Activated CD4-positive, alpha-beta T cell treated with anti-CD3 and anti-CD28 coated beads for 36 hours (primary cell): ENCODE measurements at regions of chr18 and their contacts with region 1.

Region 1: GRCh38 chr18:72544092-72544886 is at the start of gene CBLN2:
- DNase-seq: peak; percentile 77
- ATAC-seq: peak; percentile 76
- H3K4me3 Mint-ChIP-seq: no peak within 1 kb of the TSS
- H3K27ac Mint-ChIP-seq: no peak within 1 kb of the TSS
- H3K4me1 Mint-ChIP-seq: peaks cover 12% of the 10 kb centered on the region
- H3K27me3 Mint-ChIP-seq: peaks cover 34% of the 10 kb centered on the region
- total RNA-seq, gene CBLN2: not detected

Region 2: GRCh38 chr18:70598406-70598805 is 1945.9 kb before region 1 on chr18:
- CTCF ChIA-PET with region 1: no interaction called
- POLR2A ChIA-PET with region 1: no interaction called
- intact Hi-C with region 1: loop called in 1 of 2 experiments (anchors 10 kb)
- DNase-seq: no peak
- ATAC-seq: no peak
- H3K4me3 Mint-ChIP-seq: no peak overlapping the region
- H3K27ac Mint-ChIP-seq: no peak overlapping the region
- H3K4me1 Mint-ChIP-seq: peaks cover 8% of the 10 kb centered on the region
- H3K27me3 Mint-ChIP-seq: no peaks in the 10 kb centered on the region

Region 3: DNA sequence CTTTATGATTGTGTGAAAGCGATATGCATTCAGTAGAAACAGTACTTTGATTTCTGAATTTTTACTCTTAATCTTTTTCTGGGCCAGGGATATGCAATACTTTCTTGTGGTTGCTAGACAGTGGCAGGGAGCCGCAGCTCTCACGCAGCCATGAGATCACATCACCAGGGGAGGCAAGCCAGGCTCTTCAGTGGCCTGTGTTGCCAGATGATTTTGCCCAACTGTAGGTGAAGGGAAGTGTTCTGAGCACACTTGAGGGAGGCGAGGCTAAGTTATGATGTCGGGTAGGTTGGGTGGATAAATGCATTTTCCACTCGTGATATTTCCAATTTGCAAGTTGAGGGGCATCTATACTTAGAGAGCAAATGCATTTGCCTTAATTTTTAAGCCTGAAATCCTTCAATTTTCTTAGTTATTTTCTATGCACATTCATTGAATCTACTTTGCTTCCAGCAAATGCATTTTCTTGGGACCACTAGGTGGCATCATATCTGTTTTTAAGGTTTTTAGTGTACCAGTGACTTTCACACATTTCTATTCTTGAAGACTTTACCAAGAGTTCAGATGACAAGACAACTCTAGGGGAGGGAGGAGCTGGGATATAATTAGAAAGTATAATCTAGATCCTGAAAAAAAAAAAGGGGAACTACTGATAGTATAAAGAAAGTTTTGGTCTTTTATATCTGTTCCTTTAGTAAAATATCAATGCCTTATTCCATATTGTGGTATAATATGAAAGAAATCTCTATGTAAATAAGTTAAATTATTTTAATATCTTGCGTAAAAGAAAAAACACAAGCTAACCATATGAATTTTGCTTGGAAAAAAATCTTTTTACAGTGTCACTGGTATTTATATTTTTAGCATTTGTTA is 1612.1 kb before region 1 on chr18:
- CTCF ChIA-PET with region 1: interaction called, 4 read pairs
- POLR2A ChIA-PET with region 1: no interaction called
- intact Hi-C with region 1: loop called in 1 of 2 experiments (anchors 1 kb)
- DNase-seq: no peak
- ATAC-seq: no peak
- H3K4me3 Mint-ChIP-seq: no peak overlapping the region
- H3K27ac Mint-ChIP-seq: no peak overlapping the region
- H3K4me1 Mint-ChIP-seq: peaks cover 7% of the 10 kb centered on the region
- H3K27me3 Mint-ChIP-seq: no peaks in the 10 kb centered on the region

Region 4: GRCh38 chr18:72555101-72555500 is 10.8 kb after region 1 on chr18:
- CTCF ChIA-PET with region 1: no interaction called
- POLR2A ChIA-PET with region 1: no interaction called
- intact Hi-C with region 1: no loop called
- DNase-seq: peak; percentile 6
- ATAC-seq: no peak
- H3K4me3 Mint-ChIP-seq: no peak overlapping the region
- H3K27ac Mint-ChIP-seq: no peak overlapping the region
- H3K4me1 Mint-ChIP-seq: peaks cover 2% of the 10 kb centered on the region
- H3K27me3 Mint-ChIP-seq: no peaks in the 10 kb centered on the region

Region 5: DNA sequence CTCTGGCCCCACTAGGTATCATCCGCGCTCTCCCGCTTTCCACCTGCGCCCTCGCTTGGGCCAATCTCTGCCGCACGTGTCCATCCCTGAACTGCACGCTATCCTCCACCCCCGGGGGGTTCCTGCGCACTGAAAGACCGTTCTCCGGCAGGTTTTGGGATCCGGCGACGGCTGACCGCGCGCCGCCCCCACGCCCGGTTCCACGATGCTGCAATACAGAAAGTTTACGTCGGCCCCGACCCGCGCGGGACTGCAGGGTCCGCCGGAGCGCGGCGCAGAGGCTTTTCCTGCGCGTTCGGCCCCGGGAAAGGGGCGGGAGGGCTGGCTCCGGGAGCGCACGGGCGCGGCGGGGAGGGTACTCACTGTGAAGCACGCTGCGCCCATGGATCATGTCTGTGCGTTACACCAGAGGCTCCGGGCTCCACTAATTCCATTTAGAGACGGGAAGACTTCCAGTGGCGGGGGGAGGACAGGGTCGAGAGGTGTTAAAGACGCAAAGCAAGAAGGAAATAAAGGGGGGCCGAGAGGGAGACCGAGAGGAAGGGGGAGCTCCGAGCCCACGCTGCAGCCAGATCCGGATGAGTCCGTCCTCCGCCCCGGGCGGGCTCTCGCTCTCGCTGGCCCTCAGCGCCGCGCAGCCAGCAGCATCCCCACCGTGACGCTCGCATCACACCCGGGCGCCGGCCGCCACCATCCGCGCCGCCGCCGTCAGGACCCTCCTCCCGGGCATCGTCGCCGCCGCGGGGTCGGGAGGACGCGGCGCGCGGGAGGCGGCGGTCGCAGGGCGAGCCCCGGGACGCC is 322.8 kb after region 1 on chr18:
- CTCF ChIA-PET with region 1: no interaction called
- POLR2A ChIA-PET with region 1: no interaction called
- intact Hi-C with region 1: loop called in 1 of 2 experiments (anchors 5 kb)
- DNase-seq: no peak
- ATAC-seq: no peak
- H3K4me3 Mint-ChIP-seq: no peak overlapping the region
- H3K27ac Mint-ChIP-seq: no peak overlapping the region
- H3K4me1 Mint-ChIP-seq: no peaks in the 10 kb centered on the region
- H3K27me3 Mint-ChIP-seq: peaks cover 34% of the 10 kb centered on the region